ENCODE measurements at regions of chr18 and their contacts with region 1.

Region 1: DNA sequence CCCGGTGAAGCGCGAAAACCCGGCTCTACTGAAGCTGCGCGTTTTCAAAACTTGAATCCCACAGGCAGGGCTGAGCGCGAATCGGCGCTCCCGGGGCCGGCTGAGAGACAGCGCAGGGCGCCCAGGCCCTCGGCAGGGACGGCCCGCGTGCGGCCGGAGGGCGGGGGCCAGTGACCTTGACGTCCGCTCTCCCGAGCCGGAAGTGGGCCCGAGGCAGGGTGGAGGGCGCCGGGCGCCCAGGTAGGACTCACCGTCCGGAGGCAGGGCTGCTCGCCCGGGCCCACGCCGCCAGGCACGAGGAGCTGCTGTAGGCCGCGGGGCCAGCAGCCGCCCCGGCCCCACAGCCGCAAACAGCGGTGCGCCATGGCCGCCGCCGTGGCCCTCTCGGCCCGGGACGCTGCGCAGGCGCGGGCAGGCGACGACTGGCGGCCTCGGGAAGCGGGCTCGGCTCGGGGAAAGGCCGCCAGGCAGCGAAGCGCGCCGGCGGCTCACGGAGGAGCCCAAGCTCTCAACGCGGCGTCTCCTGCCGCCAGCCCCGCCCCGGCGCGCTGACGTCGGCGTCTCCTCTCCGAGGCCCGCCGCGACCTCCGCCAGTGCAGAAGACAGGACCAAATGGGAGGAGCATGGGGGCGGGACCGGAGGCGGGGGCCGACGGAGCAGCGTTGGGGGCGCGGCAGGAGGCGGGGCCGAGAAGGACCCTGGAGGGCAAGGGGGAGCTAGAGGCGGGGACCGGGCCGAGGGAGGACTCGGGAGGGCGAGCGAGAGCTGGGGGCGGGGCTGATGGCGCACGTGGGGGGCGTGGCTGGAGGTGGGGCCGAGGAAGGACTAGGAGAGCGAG is at the start of gene AFG3L2:
- DNase-seq: peak; percentile 98 to 100 (median 99)
- H3K4me3 ChIP-seq: peak within 1 kb of the TSS; percentile 67 to 99 (median 92)
- H3K27ac ChIP-seq: peak within 1 kb of the TSS; percentile 66 to 98 (median 94)
- H3K27me3 ChIP-seq: no peaks in the 10 kb centered on the region
- CTCF ChIP-seq: peak in 4 of 56 donors; percentile 5 to 28 (median 12)
- total RNA-seq, gene AFG3L2: 31.6 to 64.9 (median 50.8) TPM

Region 2: GRCh38 chr18:12066910-12067511 is 309.9 kb before region 1 on chr18:
- intact Hi-C with region 1: no loop called
- DNase-seq: no peak
- H3K4me3 ChIP-seq: no peak overlapping the region
- H3K27ac ChIP-seq: no peak overlapping the region
- H3K27me3 ChIP-seq: no peaks in the 10 kb centered on the region
- CTCF ChIP-seq: no peak

Region 3: DNA sequence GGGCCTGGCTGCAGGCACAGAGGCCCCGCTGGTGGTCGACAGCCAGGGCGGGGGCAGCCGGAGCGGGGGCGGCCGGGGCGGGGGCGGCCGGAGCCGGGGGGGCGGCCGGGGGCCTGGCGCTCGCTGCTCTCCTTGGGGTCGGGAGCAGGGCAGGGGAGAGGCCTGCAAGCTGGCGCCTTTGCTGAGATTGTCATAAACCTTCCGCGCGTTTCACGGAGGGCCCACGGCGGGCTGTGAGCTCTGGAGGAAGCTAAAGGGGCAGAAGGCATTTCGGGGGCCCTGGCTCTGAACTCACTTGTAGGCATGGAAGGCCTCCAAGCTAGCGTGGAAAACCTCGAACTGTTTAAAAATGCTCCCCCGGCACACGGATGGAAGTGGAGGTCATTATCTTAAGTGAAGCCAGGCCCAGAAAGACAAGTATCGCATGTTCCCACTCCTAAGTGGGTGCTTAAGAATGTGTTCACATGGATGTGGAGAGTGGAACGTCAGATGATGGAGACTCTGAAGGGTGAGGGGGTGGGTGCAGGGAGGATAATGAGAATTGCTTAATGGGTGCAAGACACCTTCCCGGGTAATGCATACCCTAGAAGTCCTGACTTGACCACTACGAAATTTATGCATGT is 31.4 kb after region 1 on chr18:
- intact Hi-C with region 1: loop called in 1 of 2 experiments (anchors 1 kb)
- DNase-seq: peak in 1 of 10 donors; percentile 15
- H3K4me3 ChIP-seq: peak overlapping the region; percentile 50 to 78 (median 67)
- H3K27ac ChIP-seq: peak overlapping the region in 56 of 59 donors; percentile 64 to 97 (median 90)
- H3K27me3 ChIP-seq: no peaks in the 10 kb centered on the region
- CTCF ChIP-seq: no peak

Region 4: DNA sequence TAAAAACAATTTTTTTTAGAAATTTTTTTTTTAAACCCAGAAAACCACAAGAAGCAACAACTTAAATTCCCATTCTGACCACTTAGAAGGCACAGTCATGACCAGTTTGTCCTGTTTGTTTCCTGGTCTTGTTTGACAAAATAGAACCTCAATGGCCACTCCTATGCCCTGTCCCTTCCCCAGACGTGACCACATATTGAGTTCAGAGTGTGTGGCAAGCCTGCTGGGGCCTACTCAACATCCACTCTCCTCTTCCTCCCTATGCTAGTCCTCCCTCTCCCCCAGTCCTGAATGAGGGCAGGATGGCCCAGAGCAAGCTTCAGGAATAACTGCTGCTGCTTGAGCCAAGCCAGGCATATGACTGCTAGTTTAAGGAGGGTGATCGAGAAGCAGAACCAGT is 120.4 kb after region 1 on chr18:
- intact Hi-C with region 1: no loop called
- DNase-seq: no peak
- H3K4me3 ChIP-seq: no peak overlapping the region
- H3K27ac ChIP-seq: no peak overlapping the region
- H3K27me3 ChIP-seq: no peaks in the 10 kb centered on the region
- CTCF ChIP-seq: no peak

Region 5: DNA sequence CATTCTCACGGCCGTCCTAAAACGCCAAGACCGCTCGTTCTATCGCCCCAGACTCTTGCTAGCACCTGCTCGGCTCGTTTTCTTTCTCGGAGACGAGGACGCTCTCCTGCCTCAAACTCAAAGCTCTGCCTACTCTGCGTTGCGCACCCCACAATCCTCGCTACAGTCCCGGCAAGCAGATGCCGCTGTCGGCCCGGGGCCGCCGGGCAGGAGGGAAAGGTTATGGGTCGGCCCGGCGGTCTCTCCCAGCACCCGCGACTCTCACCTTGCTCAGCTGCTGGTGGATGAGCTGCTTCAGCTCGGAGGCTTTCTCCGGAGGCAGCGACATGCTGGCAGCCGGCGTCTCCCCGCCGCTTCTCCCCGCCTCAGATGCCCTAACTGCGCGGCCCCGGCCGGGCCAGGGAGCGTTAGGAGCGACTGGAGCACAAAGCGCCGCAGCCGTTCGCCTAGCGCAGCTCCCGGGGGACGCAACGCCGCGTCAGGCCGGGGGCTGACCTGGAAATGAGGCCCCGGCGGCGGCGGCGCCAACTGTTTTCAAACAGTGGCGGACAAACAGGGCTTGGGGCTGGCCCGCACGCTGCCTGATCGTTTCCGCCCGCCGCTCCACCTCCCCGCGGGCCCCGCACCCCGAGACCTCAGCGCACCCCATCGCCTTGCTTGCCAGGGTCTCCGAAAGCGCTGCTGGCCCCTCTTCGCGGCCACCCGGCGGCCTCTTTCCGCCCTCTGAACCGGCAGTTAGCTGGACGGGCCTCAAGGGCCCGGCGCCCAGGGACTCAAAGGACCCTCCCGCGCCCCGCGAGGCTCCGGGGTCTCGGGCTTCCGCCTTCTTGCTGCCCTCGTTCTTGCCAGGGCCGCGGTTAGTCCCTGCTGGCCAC is 325.5 kb after region 1 on chr18 and contains the starts of genes CEP76 and PSMG2:
- intact Hi-C with region 1: loop called in 1 of 2 experiments (anchors 2 kb)
- DNase-seq: peak; percentile 72 to 89 (median 84)
- H3K4me3 ChIP-seq: peak within 1 kb of the TSS; percentile 58 to 99 (median 94)
- H3K27ac ChIP-seq: peak within 1 kb of the TSS; percentile 63 to 100 (median 98)
- H3K27me3 ChIP-seq: no peaks in the 10 kb centered on the region
- CTCF ChIP-seq: peak in 28 of 56 donors; percentile 3 to 43 (median 20)
- total RNA-seq, gene CEP76: 5.4 to 17.5 (median 10.4) TPM
- total RNA-seq, gene PSMG2: 46.0 to 79.5 (median 56.9) TPM

Region 6: DNA sequence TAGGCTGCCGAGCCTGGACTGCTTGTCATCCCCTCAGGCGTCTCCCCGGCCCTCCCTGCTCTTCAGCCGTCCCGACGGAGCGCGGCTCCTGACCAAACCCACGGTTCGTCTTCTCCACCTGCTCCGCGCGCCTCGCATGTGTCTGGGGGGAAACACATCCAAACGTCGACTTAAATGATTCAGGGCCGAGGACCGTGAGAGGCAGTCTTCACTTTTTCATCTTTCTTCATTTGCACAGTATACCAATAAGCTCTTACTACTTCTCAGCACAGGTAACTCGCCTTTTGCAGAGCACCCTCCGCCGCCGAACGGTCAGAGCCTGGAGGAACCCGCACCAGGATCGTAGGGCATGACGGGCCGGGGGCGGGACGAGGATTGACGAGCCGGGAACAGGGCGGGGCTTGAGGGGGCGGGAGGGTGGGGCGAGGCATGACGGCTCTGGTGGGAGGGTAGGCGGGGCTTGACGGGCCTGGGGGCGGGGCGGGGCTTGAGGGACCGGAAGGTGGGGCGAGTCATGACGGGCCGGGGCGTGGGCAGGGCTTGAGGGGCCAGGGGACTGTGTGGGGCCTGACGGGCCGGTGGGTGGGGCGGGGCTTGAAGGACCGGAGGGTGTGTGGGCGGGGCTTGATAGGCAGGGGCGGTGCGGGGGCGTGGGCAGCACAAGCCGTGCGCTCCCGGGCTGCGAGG is 570.6 kb after region 1 on chr18 and contains the start of gene SEH1L:
- intact Hi-C with region 1: loop called (anchors 5 to 10 kb)
- DNase-seq: peak; percentile 97 to 100 (median 98)
- H3K4me3 ChIP-seq: peak within 1 kb of the TSS; percentile 65 to 99 (median 84)
- H3K27ac ChIP-seq: peak within 1 kb of the TSS; percentile 70 to 99 (median 95)
- H3K27me3 ChIP-seq: no peaks in the 10 kb centered on the region
- CTCF ChIP-seq: peak in 1 of 56 donors; percentile 3
- total RNA-seq, gene SEH1L: 28.6 to 78.9 (median 56.1) TPM

Measured in dorsolateral prefrontal cortex (tissue), 120 donors.